MCF 10A (cell line): ENCODE measurements at regions of chr14 and their contacts with region 1.

Region 1: DNA sequence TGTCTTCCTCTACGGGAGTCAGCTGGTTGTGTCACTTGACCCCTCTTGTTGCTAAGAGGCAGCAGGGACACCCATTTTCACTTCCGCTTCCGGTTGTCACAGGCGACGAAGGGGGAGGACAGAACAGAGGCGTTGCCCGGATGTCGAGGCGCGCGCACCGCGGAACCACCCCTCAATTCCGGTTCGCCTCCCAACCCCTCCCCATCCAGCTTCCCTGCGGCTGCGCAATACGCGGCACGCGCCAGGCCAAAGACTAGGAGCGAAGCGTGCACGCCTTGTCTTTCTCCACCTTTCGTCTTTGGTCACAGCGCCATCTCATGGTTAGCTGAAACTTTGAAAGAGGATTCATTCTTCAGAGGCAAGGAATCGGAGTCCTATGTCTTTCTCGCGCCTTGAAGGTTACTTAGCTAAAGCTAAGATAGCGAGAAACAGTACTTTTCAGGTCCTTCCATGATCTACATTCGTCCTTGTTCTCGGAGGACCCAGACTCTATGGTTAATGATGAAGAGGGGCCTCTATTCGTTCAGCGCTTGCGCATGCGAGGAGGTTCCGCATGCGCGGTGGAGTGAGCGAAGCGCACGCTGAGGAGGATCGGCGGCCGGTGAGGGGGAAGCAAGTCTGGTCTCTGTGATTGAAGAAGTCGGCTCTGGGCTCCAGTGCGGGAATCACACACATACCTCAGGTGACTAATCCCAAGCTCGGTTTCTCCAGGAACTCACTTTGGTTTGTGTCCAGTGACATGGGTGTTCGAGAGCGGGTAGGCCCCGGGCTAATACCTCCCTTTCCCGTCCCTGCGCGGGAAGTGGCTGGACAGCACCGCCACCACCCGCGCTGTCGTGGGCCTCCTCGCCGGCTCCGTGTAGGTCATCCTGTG is at the starts of genes ATP6V1D and EIF2S1:
- DNase-seq: peak; percentile 99
- H3K4me3 Mint-ChIP-seq: peak within 1 kb of the TSS; percentile 90
- H3K27ac Mint-ChIP-seq: peak within 1 kb of the TSS; percentile 99
- H3K4me1 Mint-ChIP-seq: peaks cover 54% of the 10 kb centered on the region
- H3K27me3 Mint-ChIP-seq: no peaks in the 10 kb centered on the region
- CTCF ChIP-seq: peak; percentile 99
- total RNA-seq, gene ATP6V1D: 70.7 and 74.1 TPM in 2 replicates
- total RNA-seq, gene EIF2S1: 337 and 338 TPM in 2 replicates

Region 2: GRCh38 chr14:67343601-67344230 is 16.3 kb before region 1 on chr14:
- CTCF ChIA-PET with region 1: interaction called, 4 read pairs
- POLR2A ChIA-PET with region 1: interaction called, 46 read pairs
- intact Hi-C with region 1: no loop called
- DNase-seq: peak; percentile 63
- H3K4me3 Mint-ChIP-seq: no peak overlapping the region
- H3K27ac Mint-ChIP-seq: peak overlapping the region; percentile 67
- H3K4me1 Mint-ChIP-seq: peaks cover 17% of the 10 kb centered on the region
- H3K27me3 Mint-ChIP-seq: no peaks in the 10 kb centered on the region
- CTCF ChIP-seq: no peak

Region 3: DNA sequence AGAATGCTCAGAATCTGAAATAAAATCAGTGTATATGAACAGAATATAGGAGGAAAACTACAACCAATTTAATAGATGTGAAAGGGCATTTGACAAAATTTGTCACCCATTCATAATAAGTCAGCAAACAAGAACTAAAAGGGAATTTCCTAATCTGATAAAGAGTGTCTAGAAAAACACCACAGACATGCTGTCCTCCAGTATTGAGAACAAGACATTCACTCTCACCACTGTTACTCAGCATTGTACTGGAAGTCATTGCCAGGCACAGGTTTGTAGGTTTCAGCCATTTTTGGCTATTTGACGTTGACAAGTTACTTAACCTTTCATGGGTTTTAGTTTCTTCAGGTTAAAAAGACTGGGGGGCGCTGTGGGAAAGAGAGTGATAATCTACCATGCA is 13.3 kb after region 1 on chr14:
- CTCF ChIA-PET with region 1: interaction called, 27 read pairs
- POLR2A ChIA-PET with region 1: interaction called, 17 read pairs
- intact Hi-C with region 1: no loop called
- DNase-seq: no peak
- H3K4me3 Mint-ChIP-seq: no peak overlapping the region
- H3K27ac Mint-ChIP-seq: no peak overlapping the region
- H3K4me1 Mint-ChIP-seq: peaks cover 11% of the 10 kb centered on the region
- H3K27me3 Mint-ChIP-seq: no peaks in the 10 kb centered on the region
- CTCF ChIP-seq: no peak

Region 4: GRCh38 chr14:67411820-67412421 is 51.9 kb after region 1 on chr14 and contains the start of gene PLEK2:
- CTCF ChIA-PET with region 1: interaction called, 5 read pairs
- POLR2A ChIA-PET with region 1: interaction called, 13 read pairs
- intact Hi-C with region 1: no loop called
- DNase-seq: peak; percentile 81
- H3K4me3 Mint-ChIP-seq: peak within 1 kb of the TSS; percentile 84
- H3K27ac Mint-ChIP-seq: peak within 1 kb of the TSS; percentile 63
- H3K4me1 Mint-ChIP-seq: peaks cover 24% of the 10 kb centered on the region
- H3K27me3 Mint-ChIP-seq: no peaks in the 10 kb centered on the region
- CTCF ChIP-seq: no peak
- total RNA-seq, gene PLEK2: 22.4 and 39.9 TPM in 2 replicates

Region 5: DNA sequence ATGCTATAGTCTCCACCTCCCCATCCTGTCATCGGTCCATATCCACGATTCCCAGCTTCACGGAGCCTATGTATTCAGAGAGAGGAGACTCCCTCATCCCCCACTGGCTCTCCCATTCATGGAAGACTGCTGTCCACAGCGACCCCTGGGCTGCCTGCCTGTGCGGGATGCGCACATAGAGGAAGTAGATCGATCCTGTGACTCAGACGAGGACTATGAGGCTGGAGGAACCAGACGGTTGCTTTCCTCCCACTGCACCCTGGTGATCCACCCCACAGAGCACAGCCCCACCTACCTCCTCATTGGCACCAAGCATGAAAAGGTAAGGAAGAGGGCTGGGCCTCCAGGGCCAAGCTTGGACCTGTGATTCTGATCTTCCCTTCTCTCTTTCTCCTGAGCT is 215.7 kb after region 1 on chr14:
- CTCF ChIA-PET with region 1: no interaction called
- POLR2A ChIA-PET with region 1: no interaction called
- intact Hi-C with region 1: no loop called
- DNase-seq: no peak
- H3K4me3 Mint-ChIP-seq: no peak overlapping the region
- H3K27ac Mint-ChIP-seq: no peak overlapping the region
- H3K4me1 Mint-ChIP-seq: peaks cover 5% of the 10 kb centered on the region
- H3K27me3 Mint-ChIP-seq: no peaks in the 10 kb centered on the region
- CTCF ChIP-seq: no peak